Psoas muscle (tissue), 8 donors: ENCODE measurements at regions of chr5 and their contacts with region 1.

Region 1: GRCh38 chr5:177524941-177525618 is 8.3 kb upstream of the DDX41 start:
- DNase-seq: peak in 1 of 2 donors; percentile 71
- ATAC-seq: peak; percentile 43 to 83 (median 71)
- H3K4me3 ChIP-seq: no peak overlapping the region
- H3K27ac ChIP-seq: peak overlapping the region; percentile 80
- H3K4me1 ChIP-seq: peaks cover 28% of the 10 kb centered on the region
- H3K27me3 ChIP-seq: no peaks in the 10 kb centered on the region
- CTCF ChIP-seq: peak; percentile 9

Region 2: DNA sequence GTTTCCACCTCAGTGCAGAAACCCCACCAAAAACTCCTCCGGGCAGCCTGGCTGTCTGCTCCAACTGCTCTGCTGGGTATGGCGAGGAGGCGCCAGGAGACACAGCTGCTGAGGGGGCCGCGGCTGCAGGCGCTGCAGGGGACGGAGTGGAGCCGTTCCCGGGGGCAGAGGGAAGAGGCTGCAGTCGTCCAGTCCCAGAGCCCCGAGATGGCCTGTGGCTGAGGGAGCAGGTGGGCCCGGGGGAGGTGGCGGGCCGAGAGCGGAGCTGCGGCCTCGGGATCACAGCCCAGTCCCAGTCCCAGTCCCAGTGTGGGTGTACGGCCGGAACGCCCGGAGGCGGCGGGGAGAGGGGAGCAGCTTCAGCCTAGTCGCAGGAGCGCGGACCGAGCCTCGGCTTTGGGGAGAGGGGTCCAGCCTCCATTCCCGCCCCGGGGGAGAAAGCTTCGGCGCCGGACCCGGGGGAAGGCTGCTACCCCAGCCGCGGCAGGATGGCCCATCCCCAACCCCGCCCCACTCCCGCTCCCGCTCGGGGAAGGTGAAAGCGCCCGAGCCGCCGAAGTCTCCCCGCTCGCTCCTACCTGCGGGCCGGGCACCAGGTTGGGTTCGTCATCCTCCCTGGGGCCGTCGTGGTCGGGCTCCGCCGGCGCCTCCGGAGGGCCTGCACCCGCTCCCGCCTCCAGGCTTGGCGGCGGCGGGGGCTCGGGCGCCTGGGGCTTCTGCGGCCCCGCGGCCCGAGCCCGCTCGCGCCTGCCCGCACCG is 28.8 kb after region 1 on chr5:
- intact Hi-C with region 1: loop called in 1 of 2 experiments (anchors 2 kb)
- DNase-seq: peak; percentile 40 to 74
- ATAC-seq: peak; percentile 20 to 54 (median 36)
- H3K4me3 ChIP-seq: peak overlapping the region; percentile 83
- H3K27ac ChIP-seq: peak overlapping the region; percentile 85
- H3K4me1 ChIP-seq: peaks cover 45% of the 10 kb centered on the region
- H3K27me3 ChIP-seq: no peaks in the 10 kb centered on the region
- CTCF ChIP-seq: no peak